Heart left ventricle (tissue), 16 donors: ENCODE measurements at regions of chr2 and their contacts with region 1.

Region 1: GRCh38 chr2:52500561-52500960 is 1267.0 kb upstream of the CHAC2 start:
- DNase-seq: peak in 2 of 5 donors; percentile 22 to 28
- ATAC-seq: peak; percentile 77 to 95 (median 82)
- H3K4me3 ChIP-seq: no peak overlapping the region
- H3K27ac ChIP-seq: peak overlapping the region in 7 of 12 donors; percentile 9 to 59 (median 45)
- H3K4me1 ChIP-seq: peaks cover 0 to 21% (median 6%) of the 10 kb centered on the region in 12 donors
- H3K27me3 ChIP-seq: no peaks in the 10 kb centered on the region
- CTCF ChIP-seq: no peak
- POLR2A ChIP-seq: no peak

Region 2: GRCh38 chr2:52445686-52446085 is 54.9 kb before region 1 on chr2:
- intact Hi-C with region 1: loop called in 2 of 10 experiments (anchors 2 to 10 kb)
- DNase-seq: no peak
- ATAC-seq: peak in 2 of 4 donors; percentile 51 to 62
- H3K4me3 ChIP-seq: no peak overlapping the region
- H3K27ac ChIP-seq: no peak overlapping the region
- H3K4me1 ChIP-seq: peaks cover 0 to 9% (median 0%) of the 10 kb centered on the region in 12 donors
- H3K27me3 ChIP-seq: no peaks in the 10 kb centered on the region
- CTCF ChIP-seq: no peak
- POLR2A ChIP-seq: no peak

Region 3: GRCh38 chr2:52456561-52457377 is 43.8 kb before region 1 on chr2:
- intact Hi-C with region 1: loop called in 1 of 10 experiments (anchors 2 kb)
- DNase-seq: no peak
- ATAC-seq: no peak
- H3K4me3 ChIP-seq: no peak overlapping the region
- H3K27ac ChIP-seq: no peak overlapping the region
- H3K4me1 ChIP-seq: no peaks in the 10 kb centered on the region
- H3K27me3 ChIP-seq: no peaks in the 10 kb centered on the region
- CTCF ChIP-seq: no peak
- POLR2A ChIP-seq: no peak